CD4-positive, alpha-beta T cell (primary cell): ENCODE measurements at regions of chr11 and their contacts with region 1.

Region 1: DNA sequence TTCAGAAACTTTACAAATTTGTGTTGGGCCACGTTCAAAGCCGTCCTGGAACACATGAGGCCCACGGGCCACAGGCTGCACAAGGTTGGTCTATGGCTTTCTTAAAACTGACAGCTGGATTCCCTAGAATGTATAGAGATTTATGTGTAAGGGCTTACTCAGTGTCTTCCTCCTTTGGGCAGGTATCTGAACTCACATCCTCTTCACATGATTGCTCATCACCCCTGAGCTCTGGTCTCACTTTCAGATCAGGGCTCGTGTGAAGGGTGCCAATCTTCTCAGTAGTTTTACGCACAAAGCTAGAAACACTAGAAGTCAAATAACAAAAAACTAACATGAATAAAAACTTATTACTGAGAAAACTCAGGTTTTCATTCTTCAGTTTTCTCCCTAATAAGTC is 27.1 kb downstream of the HPS5 start:
- DNase-seq: no peak
- ATAC-seq: no peak
- H3K4me3 ChIP-seq: no peak overlapping the region
- H3K4me3 Mint-ChIP-seq: no peak overlapping the region
- H3K27ac ChIP-seq: no peak overlapping the region
- H3K27ac Mint-ChIP-seq: no peak overlapping the region
- H3K4me1 ChIP-seq: no peaks in the 10 kb centered on the region
- H3K4me1 Mint-ChIP-seq: no peaks in the 10 kb centered on the region
- H3K27me3 ChIP-seq: no peaks in the 10 kb centered on the region
- H3K27me3 Mint-ChIP-seq: no peaks in the 10 kb centered on the region
- CTCF ChIP-seq: no peak

Region 2: DNA sequence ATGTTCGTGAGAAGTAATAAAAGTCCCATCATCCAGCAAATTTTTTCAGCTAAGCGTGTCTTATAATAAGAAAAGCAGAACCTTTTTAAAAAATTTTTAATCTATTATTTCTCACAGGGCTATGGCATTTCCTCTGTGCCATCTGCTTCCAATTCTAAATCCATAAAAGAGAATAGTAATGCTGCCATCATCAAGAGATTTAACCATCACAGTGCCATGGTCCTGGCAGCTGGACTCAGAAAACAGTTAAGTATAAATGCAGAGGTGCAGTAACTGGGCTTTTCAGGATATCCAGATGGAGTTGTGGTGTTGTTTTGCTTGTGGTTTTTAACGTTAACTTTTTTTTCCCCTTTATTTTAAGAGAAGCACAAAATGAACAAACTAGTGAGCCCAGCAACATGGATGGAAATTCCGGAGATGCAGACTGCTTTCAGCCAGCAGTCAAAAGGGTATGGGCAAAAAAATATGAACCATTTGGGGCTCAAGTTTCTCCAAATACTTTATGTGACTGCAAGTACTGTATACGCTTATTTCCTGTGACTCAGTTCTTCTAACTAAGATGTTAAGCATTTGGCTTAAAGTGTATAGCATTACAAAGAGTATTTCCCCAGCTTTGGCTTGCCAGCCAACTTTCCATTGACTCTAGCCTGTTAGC is 52.7 kb after region 1 on chr11:
- CTCF ChIA-PET with region 1: no interaction called
- POLR2A ChIA-PET with region 1: no interaction called
- intact Hi-C with region 1: no loop called
- DNase-seq: no peak
- ATAC-seq: no peak
- H3K4me3 ChIP-seq: no peak overlapping the region
- H3K4me3 Mint-ChIP-seq: no peak overlapping the region
- H3K27ac ChIP-seq: no peak overlapping the region
- H3K27ac Mint-ChIP-seq: peak overlapping the region; percentile 75
- H3K4me1 ChIP-seq: no peaks in the 10 kb centered on the region
- H3K4me1 Mint-ChIP-seq: peaks cover 17% of the 10 kb centered on the region
- H3K27me3 ChIP-seq: no peaks in the 10 kb centered on the region
- H3K27me3 Mint-ChIP-seq: no peaks in the 10 kb centered on the region
- CTCF ChIP-seq: no peak

Region 3: GRCh38 chr11:18492888-18493287 is 198.0 kb after region 1 on chr11:
- CTCF ChIA-PET with region 1: no interaction called
- POLR2A ChIA-PET with region 1: no interaction called
- intact Hi-C with region 1: loop called in 1 of 2 experiments (anchors 10 kb)
- DNase-seq: no peak
- ATAC-seq: no peak
- H3K4me3 ChIP-seq: no peak overlapping the region
- H3K4me3 Mint-ChIP-seq: no peak overlapping the region
- H3K27ac ChIP-seq: no peak overlapping the region
- H3K27ac Mint-ChIP-seq: peak overlapping the region; percentile 1
- H3K4me1 ChIP-seq: no peaks in the 10 kb centered on the region
- H3K4me1 Mint-ChIP-seq: peaks cover 13% of the 10 kb centered on the region
- H3K27me3 ChIP-seq: no peaks in the 10 kb centered on the region
- H3K27me3 Mint-ChIP-seq: no peaks in the 10 kb centered on the region
- CTCF ChIP-seq: no peak